Left ventricle myocardium superior (tissue), 1 donor: ENCODE measurements at regions of chr6 and their contacts with region 1.

Region 1: DNA sequence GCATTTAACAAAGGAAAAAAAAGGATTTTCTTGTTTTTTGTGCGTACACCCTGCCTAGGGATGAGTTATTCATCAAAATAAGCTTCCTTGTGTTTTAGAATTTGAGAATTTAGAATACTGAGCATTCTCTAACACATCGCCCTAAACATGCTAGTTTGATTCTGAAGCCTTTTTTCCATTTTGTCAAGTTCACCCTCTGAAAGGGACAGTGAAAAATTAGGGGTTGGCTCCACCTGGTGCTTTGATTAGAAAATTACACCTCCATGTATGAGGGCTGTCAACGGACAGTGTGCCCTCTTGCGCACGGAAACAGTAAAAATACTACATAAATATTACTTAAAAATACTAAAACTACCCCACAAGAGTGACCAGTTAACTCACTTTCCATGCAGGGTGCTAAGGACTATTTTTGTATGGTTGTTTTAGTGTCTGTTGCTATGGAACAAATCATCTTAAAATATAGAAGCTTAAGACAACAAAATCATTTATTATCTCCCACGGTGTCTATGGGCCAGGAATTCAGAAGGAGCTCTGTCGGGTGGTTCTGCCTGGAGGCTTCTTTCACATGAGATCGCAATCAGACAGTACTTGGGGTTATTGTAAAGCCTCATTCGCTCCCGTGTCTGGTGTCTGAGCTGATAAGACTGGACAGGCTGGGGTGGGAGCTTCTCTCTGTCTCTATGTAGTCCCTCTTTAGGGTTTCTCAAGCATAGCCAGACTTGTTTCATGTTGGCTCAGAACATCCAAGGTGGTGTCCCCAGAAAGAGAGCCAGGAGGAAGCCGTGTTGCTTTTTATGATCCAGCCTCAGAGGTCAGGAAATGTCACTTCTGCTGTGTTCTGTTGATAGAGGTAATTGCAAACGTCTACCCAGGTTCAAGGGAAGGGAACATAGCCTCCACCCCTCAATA is 41.1 kb upstream of the TMEM170B start:
- DNase-seq: no peak
- ATAC-seq: peak; percentile 93

Region 2: DNA sequence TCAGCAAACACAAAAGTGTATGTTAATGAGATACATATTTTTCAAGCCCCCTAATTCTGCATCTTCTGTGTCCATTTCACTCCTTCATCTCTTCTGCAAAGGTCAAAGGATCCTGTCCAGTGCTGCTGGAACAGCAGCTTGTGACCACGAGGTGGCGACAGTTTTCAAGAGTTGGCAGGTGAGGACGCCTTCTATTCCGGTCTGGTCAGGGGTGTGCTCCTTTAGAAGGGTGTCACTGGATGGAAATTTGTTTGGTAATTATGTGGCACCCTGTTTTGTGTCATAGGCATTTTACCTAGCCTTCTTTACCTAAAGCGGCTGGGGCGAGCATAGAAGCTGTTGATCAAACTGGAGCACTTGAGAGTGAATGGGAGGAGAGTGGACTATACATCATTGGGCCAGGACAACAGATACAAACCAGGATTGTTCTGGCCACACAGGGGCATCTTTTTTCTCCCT is 352.0 kb before region 1 on chr6:
- intact Hi-C with region 1: loop called (anchors 1 kb)
- DNase-seq: peak; percentile 80
- ATAC-seq: peak; percentile 93

Region 3: GRCh38 chr6:11232193-11232769 is 264.1 kb before region 1 on chr6 and contains the start of gene NEDD9:
- intact Hi-C with region 1: loop called (anchors 5 kb)
- DNase-seq: peak; percentile 95
- ATAC-seq: peak; percentile 99
- total RNA-seq, gene NEDD9: 31.1 TPM

Region 4: GRCh38 chr6:11938285-11938890 is 442.0 kb after region 1 on chr6:
- intact Hi-C with region 1: no loop called
- DNase-seq: no peak
- ATAC-seq: no peak